ENCODE measurements at regions of chr2 and their contacts with region 1.

Region 1: DNA sequence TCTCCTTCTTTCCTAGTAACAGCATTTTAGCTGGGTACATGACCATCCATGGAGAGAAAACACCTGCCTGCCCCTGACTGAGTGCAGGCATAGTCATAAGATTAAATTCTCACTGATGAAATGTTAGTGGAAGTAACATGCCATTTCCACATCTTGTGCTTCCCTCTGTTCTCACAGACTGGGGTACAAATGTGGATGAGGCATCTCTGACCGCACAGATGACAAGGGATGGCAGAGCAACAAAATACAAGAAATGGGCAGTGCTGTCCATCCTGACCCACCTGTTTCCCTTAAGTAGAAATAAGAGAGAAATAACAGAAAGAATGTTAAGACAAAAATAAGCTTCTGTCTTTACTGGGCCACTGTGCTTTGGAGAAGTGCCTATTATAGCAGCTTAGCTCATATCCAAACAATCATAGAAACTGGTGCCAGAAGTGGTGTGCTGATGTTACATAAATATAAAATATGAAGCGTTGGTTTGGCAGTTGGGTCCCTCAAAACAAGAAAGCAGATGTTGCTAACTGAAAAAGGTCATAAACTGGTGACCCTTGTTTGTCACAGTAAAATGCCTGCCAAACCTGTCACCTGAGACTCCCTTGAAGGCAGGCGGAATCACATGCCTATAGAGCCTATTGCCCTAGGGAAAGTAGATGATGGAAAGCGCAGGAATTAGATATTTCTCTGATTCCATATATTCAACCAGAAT is 72.4 kb upstream of the CCDC150 start:
- DNase-seq: no peak
- H3K4me3 ChIP-seq: no peak overlapping the region
- H3K27ac ChIP-seq: no peak overlapping the region
- H3K4me1 ChIP-seq: no peaks in the 10 kb centered on the region
- H3K27me3 ChIP-seq: no peaks in the 10 kb centered on the region
- CTCF ChIP-seq: no peak

Region 2: DNA sequence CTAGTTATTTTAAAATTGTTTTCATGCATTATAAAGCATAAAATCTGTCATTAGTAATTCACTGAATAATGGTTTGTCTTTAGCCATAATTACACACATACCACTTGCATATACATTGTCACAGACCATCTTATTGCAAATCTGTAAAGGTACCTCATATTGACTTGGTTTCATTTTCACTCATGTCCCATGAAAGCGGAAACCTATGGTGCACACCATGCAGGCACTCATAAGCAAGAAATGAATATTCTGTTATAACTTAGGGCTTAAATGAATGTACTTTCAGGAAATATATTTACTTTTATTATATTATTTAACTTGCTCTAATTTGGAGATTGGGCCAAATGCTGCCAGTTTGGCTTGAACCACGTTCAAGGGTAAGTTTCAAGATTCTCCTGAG is 366.6 kb before region 1 on chr2:
- CTCF ChIA-PET with region 1: no interaction called
- POLR2A ChIA-PET with region 1: no interaction called
- intact Hi-C with region 1: no loop called
- DNase-seq: no peak
- H3K4me3 ChIP-seq: no peak overlapping the region
- H3K27ac ChIP-seq: no peak overlapping the region
- H3K4me1 ChIP-seq: 0 out of 2 replicates have a peak, but pooled peaks cover 2% of the 10 kb centered on the region
- H3K27me3 ChIP-seq: no peaks in the 10 kb centered on the region
- CTCF ChIP-seq: no peak

Region 3: GRCh38 chr2:196630531-196630930 is 63.4 kb after region 1 on chr2:
- CTCF ChIA-PET with region 1: interaction called, 14 read pairs
- POLR2A ChIA-PET with region 1: no interaction called
- intact Hi-C with region 1: no loop called
- DNase-seq: no peak
- H3K4me3 ChIP-seq: no peak overlapping the region
- H3K27ac ChIP-seq: no peak overlapping the region
- H3K4me1 ChIP-seq: no peaks in the 10 kb centered on the region
- H3K27me3 ChIP-seq: no peaks in the 10 kb centered on the region
- CTCF ChIP-seq: no peak

Region 4: DNA sequence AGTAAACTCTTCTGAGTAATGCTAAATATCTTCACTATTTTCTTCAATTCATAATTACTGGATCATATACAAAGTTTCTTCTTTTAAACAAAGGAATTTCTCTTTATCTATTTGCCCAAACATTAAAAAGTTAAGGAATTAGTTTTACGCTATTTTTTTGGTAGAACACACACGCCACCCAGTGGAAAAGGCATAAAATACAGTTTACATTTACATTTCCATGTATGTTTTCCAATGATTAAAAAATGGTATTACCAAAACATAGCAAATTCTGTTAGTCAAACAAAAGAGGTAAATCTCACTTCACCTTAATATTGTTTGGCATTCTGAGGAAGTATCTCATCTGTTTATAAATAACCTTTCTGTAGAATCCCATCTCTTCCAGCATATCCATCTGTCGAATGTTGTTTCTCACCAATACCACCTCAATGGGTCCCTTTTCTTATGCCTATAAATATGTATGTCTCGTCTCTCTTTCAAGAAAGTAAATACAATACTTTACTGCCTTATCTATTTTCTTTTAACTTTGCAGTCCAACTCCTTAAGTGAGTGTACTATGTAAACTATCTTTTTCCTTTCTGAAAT is 1210.8 kb after region 1 on chr2:
- CTCF ChIA-PET with region 1: interaction called, 18 read pairs
- POLR2A ChIA-PET with region 1: no interaction called
- intact Hi-C with region 1: no loop called
- DNase-seq: no peak
- H3K4me3 ChIP-seq: no peak overlapping the region
- H3K27ac ChIP-seq: no peak overlapping the region
- H3K4me1 ChIP-seq: no peaks in the 10 kb centered on the region
- H3K27me3 ChIP-seq: no peaks in the 10 kb centered on the region
- CTCF ChIP-seq: peak; percentile 85